Panc1 (cell line): ENCODE measurements at regions of chr3 and their contacts with region 1.

Region 1: DNA sequence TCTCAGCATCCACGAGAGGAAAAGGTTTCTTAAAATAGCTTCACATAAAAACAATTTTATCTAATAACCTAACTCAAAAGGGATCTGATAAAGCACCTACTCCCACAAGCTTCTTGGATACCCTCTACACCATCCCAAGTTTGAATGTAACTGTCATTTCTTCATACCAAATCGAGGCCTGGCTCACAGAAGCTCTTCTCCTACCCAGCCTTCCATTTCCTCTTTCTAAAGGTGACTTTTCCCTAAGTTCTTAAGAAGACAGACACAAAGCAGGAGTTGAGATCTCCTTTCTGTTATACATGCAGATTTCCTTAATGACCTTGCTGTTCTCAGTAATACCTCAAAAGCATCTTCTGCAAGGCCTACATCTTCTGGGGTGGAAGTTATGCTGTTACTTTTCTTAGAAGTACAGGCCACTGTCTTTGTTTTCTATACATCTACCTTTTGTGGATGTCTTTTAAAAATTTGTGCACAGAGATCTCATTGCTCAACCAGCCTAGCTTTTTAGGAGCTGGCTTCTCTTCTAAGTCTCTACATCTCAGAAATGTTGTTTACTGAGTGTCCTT is 3.4 kb upstream of the LRRIQ4 start:
- DNase-seq: no peak
- ATAC-seq: no peak
- H3K4me3 ChIP-seq: no peak overlapping the region
- H3K27ac ChIP-seq: no peak overlapping the region
- H3K4me1 ChIP-seq: peaks cover 17% of the 10 kb centered on the region; the same call in 1 of the 2 replicates
- H3K27me3 ChIP-seq: no peaks in the 10 kb centered on the region
- CTCF ChIP-seq: no peak

Region 2: GRCh38 chr3:169149349-169149890 is 659.9 kb before region 1 on chr3:
- CTCF ChIA-PET with region 1: no interaction called
- POLR2A ChIA-PET with region 1: no interaction called
- in situ Hi-C with region 1: no loop called
- intact Hi-C with region 1: no loop called
- DNase-seq: peak; percentile 41
- ATAC-seq: peak; percentile 96
- H3K4me3 ChIP-seq: peak overlapping the region; percentile 17 to 39
- H3K27ac ChIP-seq: no peak overlapping the region
- H3K4me1 ChIP-seq: peaks cover 22% of the 10 kb centered on the region
- H3K27me3 ChIP-seq: peaks cover 56% of the 10 kb centered on the region
- CTCF ChIP-seq: peak; percentile 94

Region 3: GRCh38 chr3:169764452-169765274 is 44.6 kb before region 1 on chr3 and contains the start of gene TERC:
- CTCF ChIA-PET with region 1: interaction called, 11 read pairs
- POLR2A ChIA-PET with region 1: no interaction called
- in situ Hi-C with region 1: no loop called
- intact Hi-C with region 1: no loop called
- DNase-seq: peak; percentile 59
- ATAC-seq: peak; percentile 93
- H3K4me3 ChIP-seq: peak within 1 kb of the TSS; percentile 64 to 83
- H3K27ac ChIP-seq: peak within 1 kb of the TSS; percentile 93
- H3K4me1 ChIP-seq: 0 out of 2 replicates have a peak, but pooled peaks cover 2% of the 10 kb centered on the region
- H3K27me3 ChIP-seq: no peaks in the 10 kb centered on the region
- CTCF ChIP-seq: no peak
- total RNA-seq, gene TERC: 6.0 TPM